ENCODE measurements at regions of chr12 and their contacts with region 1.

Region 1: GRCh38 chr12:104485651-104486362 is 29.1 kb downstream of the CHST11 start:
- DNase-seq: peak in 8 of 9 experiments; percentile 34 to 76 (median 55)
- ATAC-seq: peak; percentile 95
- H3K4me3 ChIP-seq: peak overlapping the region in 1 of 2 experiments; percentile 14
- H3K4me3 Mint-ChIP-seq: peak overlapping the region; percentile 60
- H3K27ac ChIP-seq: peak overlapping the region in 1 of 2 experiments; percentile 30
- H3K27ac Mint-ChIP-seq: peak overlapping the region; percentile 79
- H3K4me1 ChIP-seq: peaks cover 78% of the 10 kb centered on the region
- H3K4me1 Mint-ChIP-seq: peaks cover 85% of the 10 kb centered on the region
- H3K27me3 ChIP-seq: no peaks in the 10 kb centered on the region
- H3K27me3 Mint-ChIP-seq: no peaks in the 10 kb centered on the region
- CTCF ChIP-seq: no peak

Region 2: DNA sequence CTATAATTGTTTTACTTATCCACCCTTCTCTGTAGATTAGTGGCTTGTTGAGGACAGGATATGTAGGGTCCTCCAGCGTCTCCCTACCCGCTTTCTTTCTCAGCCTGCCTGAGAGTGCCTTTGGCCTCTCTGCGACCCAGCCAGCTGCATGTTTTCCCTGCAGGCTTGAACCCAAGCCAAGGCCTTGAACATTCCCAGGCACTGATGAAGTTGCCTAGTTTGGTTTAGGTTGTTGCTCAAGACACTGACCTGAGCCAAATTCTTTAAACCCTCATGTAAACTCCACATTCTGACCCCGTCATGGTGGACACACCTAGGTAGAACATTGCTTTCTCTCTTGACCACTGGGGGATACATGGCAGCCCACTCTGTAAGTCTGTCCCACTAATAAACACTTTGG is 303.7 kb before region 1 on chr12:
- CTCF ChIA-PET with region 1: no interaction called
- POLR2A ChIA-PET with region 1: no interaction called
- intact Hi-C with region 1: no loop called
- DNase-seq: no peak
- ATAC-seq: no peak
- H3K4me3 ChIP-seq: no peak overlapping the region
- H3K4me3 Mint-ChIP-seq: no peak overlapping the region
- H3K27ac ChIP-seq: no peak overlapping the region
- H3K27ac Mint-ChIP-seq: no peak overlapping the region
- H3K4me1 ChIP-seq: no peaks in the 10 kb centered on the region
- H3K4me1 Mint-ChIP-seq: no peaks in the 10 kb centered on the region
- H3K27me3 ChIP-seq: no peaks in the 10 kb centered on the region
- H3K27me3 Mint-ChIP-seq: no peaks in the 10 kb centered on the region
- CTCF ChIP-seq: no peak

Region 3: DNA sequence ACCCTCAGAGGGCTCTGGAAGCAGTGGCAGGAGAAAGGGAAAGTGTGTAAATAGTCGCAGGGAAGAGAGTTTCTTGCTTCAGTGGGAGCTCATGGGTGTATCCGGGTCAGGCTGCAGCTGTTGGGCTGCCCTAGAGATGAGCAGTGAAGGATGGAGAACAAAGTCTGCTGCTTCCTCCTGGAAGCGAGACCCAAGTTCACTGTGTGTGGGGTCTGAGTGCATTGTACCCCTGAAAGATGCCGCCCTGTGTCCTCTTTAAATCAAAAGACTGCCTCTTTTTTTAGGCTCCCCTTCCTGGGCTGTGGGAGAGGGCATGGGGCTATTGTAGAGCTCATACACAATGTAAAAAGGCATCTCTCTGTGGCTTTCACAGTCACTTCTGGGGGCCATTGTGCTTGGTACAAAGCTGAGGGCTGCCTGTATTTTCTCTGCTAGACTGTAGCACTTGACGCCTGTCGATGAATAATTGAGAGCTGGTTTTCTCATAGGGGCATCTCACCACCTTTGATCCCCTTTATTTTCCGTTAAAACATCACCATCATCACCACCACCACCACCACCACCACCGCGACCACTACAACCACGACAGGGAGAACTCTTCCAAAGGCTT is 12.3 kb before region 1 on chr12:
- CTCF ChIA-PET with region 1: interaction called, 5 read pairs
- POLR2A ChIA-PET with region 1: interaction called, 9 read pairs
- intact Hi-C with region 1: loop called in 1 of 2 experiments (anchors 2 kb)
- DNase-seq: peak in 2 of 9 experiments; percentile 19 to 50
- ATAC-seq: peak; percentile 39
- H3K4me3 ChIP-seq: no peak overlapping the region
- H3K4me3 Mint-ChIP-seq: peak overlapping the region; percentile 53
- H3K27ac ChIP-seq: peak overlapping the region in 1 of 2 experiments; percentile 63
- H3K27ac Mint-ChIP-seq: peak overlapping the region; percentile 69
- H3K4me1 ChIP-seq: peaks cover 65% of the 10 kb centered on the region
- H3K4me1 Mint-ChIP-seq: peaks cover 87% of the 10 kb centered on the region
- H3K27me3 ChIP-seq: no peaks in the 10 kb centered on the region
- H3K27me3 Mint-ChIP-seq: no peaks in the 10 kb centered on the region
- CTCF ChIP-seq: no peak

Region 4: GRCh38 chr12:104569346-104570173 is 83.8 kb after region 1 on chr12:
- CTCF ChIA-PET with region 1: no interaction called
- POLR2A ChIA-PET with region 1: no interaction called
- intact Hi-C with region 1: no loop called
- DNase-seq: peak; percentile 18 to 91 (median 53)
- ATAC-seq: peak; percentile 87
- H3K4me3 ChIP-seq: peak overlapping the region in 1 of 2 experiments; percentile 14
- H3K4me3 Mint-ChIP-seq: peak overlapping the region; percentile 61
- H3K27ac ChIP-seq: peak overlapping the region in 1 of 2 experiments; percentile 57
- H3K27ac Mint-ChIP-seq: peak overlapping the region; percentile 86
- H3K4me1 ChIP-seq: peaks cover 32% of the 10 kb centered on the region
- H3K4me1 Mint-ChIP-seq: peaks cover 56% of the 10 kb centered on the region
- H3K27me3 ChIP-seq: no peaks in the 10 kb centered on the region
- H3K27me3 Mint-ChIP-seq: no peaks in the 10 kb centered on the region
- CTCF ChIP-seq: no peak

Measured in CD8-positive, alpha-beta T cell (primary cell).